MCF 10A (cell line): ENCODE measurements at regions of chr1 and their contacts with region 1.

Region 1: GRCh38 chr1:53238197-53239155 is at the start of gene MAGOH:
- DNase-seq: peak; percentile 94
- H3K4me3 Mint-ChIP-seq: peak within 1 kb of the TSS; percentile 96
- H3K27ac Mint-ChIP-seq: peak within 1 kb of the TSS; percentile 98
- H3K4me1 Mint-ChIP-seq: peaks cover 13% of the 10 kb centered on the region
- H3K27me3 Mint-ChIP-seq: no peaks in the 10 kb centered on the region
- CTCF ChIP-seq: no peak
- total RNA-seq, gene MAGOH: 68.2 and 70.3 TPM in 2 replicates

Region 2: DNA sequence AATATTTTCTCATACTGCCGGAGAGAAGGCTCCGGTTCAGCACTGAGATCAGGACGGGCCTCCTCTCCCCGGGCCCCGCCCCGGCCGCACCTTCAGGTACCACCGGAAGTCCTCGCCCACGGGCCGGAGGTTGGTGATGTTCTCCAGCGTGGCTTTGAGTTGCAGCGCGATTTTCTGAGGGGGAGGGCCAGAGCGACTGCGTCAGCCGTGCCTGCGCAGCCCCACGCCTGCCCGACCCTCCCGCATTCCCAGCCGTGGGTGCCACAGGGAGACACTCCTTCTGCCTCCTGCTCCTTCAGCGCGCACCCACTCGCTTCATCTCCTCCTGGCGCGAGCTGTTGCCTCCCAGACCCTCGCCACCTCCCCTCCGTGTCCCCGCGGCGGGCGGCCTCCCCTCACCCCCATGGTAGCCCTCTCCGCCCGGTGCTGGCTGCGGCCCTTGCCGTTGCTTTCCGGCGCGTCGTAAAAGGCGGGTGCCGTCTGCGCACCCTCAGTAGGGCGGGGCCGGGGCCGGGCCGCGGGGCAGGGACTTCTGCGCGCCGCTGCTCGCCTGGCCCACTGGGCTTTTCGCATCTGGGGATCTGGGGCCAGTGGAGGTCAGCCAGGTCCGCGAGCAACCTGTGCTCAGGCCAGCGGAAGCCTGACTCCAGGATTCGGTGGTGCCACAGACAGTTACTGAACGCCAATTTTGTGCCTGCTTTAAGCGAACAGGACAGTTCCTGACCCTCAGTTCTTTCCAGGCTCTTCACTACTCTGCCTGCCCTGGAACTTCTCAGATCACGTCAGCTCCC is 18.1 kb before region 1 on chr1 and contains the start of gene CZIB:
- CTCF ChIA-PET with region 1: interaction called, 5 read pairs
- POLR2A ChIA-PET with region 1: interaction called, 69 read pairs
- intact Hi-C with region 1: no loop called
- DNase-seq: peak; percentile 93
- H3K4me3 Mint-ChIP-seq: peak within 1 kb of the TSS; percentile 94
- H3K27ac Mint-ChIP-seq: peak within 1 kb of the TSS; percentile 99
- H3K4me1 Mint-ChIP-seq: peaks cover 8% of the 10 kb centered on the region
- H3K27me3 Mint-ChIP-seq: no peaks in the 10 kb centered on the region
- CTCF ChIP-seq: no peak
- total RNA-seq, gene CZIB: 37.2 and 45.0 TPM in 2 replicates

Region 3: GRCh38 chr1:53271768-53272090 is 33.3 kb after region 1 on chr1:
- CTCF ChIA-PET with region 1: no interaction called
- POLR2A ChIA-PET with region 1: no interaction called
- intact Hi-C with region 1: no loop called
- DNase-seq: no peak
- H3K4me3 Mint-ChIP-seq: no peak overlapping the region
- H3K27ac Mint-ChIP-seq: peak overlapping the region; percentile 69
- H3K4me1 Mint-ChIP-seq: peaks cover 15% of the 10 kb centered on the region
- H3K27me3 Mint-ChIP-seq: no peaks in the 10 kb centered on the region
- CTCF ChIP-seq: no peak

Region 4: DNA sequence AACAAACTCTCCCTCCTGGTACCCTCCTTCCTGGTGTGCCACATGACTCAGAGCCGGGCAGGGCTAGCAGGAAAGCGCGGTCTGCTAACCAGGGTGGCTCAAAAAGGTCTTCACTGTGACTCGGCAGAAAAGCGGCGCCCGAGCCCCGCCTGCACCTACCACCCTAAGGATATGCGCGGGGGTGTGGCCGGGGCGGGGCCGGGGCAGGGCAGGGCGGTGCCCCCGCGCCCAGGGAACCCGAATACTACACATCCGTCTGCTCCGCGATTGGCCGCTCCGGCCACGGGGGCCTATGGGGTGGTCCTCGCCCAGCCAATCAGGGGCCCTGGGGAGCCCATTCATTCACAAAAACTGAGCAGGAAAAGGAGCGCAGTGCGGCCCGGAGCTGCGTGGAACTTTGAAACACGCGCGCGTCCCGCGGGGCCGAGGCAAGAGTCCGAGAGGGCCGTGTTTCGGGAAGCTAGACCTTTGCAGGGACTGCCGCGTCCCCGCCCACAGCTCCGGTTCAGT is 87.7 kb after region 1 on chr1:
- CTCF ChIA-PET with region 1: no interaction called
- POLR2A ChIA-PET with region 1: interaction called, 3 read pairs
- intact Hi-C with region 1: loop called (anchors 2 kb)
- DNase-seq: peak; percentile 96
- H3K4me3 Mint-ChIP-seq: peak overlapping the region; percentile 82
- H3K27ac Mint-ChIP-seq: peak overlapping the region; percentile 95
- H3K4me1 Mint-ChIP-seq: no peaks in the 10 kb centered on the region
- H3K27me3 Mint-ChIP-seq: no peaks in the 10 kb centered on the region
- CTCF ChIP-seq: no peak